ENCODE measurements at regions of chr6 and their contacts with region 1.

Region 1: GRCh38 chr6:593139-593906 is 63.6 kb downstream of the HUS1B start:
- DNase-seq: peak; percentile 69
- H3K4me3 Mint-ChIP-seq: no peak overlapping the region
- H3K27ac Mint-ChIP-seq: no peak overlapping the region
- H3K4me1 Mint-ChIP-seq: no peaks in the 10 kb centered on the region
- H3K27me3 Mint-ChIP-seq: no peaks in the 10 kb centered on the region
- CTCF ChIP-seq: peak; percentile 48

Region 2: DNA sequence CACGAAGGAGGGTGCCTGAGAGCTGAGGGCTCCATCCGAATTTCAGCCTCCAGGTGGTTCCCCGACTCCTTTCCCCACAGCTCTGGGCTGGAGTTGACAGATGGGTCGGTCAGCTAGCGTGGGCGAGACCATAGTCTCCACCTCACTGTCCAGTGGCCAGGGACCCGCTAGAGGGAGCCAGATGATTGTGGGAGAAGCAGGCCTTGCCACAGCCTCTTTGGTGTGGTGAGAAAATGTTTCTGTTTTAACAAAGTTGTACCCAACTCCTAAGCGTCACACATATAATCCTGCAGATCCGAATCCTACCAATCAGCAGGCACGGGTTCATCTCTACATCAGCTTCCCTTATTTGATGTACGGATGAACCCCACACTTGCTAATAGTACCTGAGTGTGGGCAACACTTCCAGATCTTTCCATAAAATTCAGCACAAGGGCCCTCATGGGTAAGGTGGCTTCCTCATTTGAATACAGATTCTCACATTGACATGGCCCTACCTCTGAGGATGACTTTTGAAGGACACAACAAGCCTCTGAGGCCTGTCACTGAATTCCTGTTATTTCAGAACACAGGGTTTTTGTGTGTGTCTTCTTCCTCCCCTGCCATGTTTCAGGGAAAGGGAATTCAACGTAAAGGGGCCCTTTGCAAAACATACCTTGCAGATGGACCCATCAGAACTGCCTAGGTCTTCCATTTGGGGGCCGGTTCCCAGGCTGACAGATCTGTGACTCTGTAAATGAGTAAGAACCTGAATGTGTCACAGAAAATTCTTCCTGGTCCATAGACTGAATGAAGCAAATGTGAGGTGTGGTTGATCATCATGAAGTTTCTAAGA is 404.3 kb before region 1 on chr6:
- CTCF ChIA-PET with region 1: no interaction called
- POLR2A ChIA-PET with region 1: no interaction called
- intact Hi-C with region 1: loop called (anchors 2 kb)
- DNase-seq: peak; percentile 97
- H3K4me3 Mint-ChIP-seq: no peak overlapping the region
- H3K27ac Mint-ChIP-seq: peak overlapping the region; percentile 69
- H3K4me1 Mint-ChIP-seq: peaks cover 18% of the 10 kb centered on the region
- H3K27me3 Mint-ChIP-seq: no peaks in the 10 kb centered on the region
- CTCF ChIP-seq: peak; percentile 92

Region 3: DNA sequence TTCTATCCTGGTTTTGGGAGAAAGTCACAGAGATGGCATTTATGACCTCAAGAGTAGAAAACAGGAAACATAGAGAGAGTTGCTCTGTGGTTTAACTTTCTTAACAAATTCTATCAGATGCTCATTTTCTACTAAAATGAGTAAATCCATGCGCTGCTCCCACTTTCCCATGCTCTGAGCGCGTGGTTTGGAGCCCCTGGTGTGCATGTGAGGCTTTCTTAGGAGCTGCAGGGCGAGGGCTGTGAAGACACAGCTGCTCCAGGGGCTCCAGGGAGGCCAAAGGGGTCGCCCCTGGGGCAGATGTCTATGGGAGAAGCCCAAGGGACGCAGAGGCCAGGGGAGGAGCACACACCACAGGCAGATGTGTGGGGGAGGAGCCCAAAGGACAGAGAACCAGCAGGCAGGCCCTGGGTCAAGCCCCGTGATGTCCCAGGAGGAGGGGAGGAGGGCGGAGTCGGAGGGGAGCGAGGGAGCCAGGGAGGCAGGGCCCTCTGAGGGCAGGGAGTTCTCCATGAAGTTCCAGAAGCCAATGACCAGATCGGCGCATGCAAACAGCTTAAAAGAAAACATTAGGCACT is 78.8 kb before region 1 on chr6:
- CTCF ChIA-PET with region 1: no interaction called
- POLR2A ChIA-PET with region 1: no interaction called
- intact Hi-C with region 1: no loop called
- DNase-seq: no peak
- H3K4me3 Mint-ChIP-seq: no peak overlapping the region
- H3K27ac Mint-ChIP-seq: no peak overlapping the region
- H3K4me1 Mint-ChIP-seq: no peaks in the 10 kb centered on the region
- H3K27me3 Mint-ChIP-seq: no peaks in the 10 kb centered on the region
- CTCF ChIP-seq: no peak

Region 4: DNA sequence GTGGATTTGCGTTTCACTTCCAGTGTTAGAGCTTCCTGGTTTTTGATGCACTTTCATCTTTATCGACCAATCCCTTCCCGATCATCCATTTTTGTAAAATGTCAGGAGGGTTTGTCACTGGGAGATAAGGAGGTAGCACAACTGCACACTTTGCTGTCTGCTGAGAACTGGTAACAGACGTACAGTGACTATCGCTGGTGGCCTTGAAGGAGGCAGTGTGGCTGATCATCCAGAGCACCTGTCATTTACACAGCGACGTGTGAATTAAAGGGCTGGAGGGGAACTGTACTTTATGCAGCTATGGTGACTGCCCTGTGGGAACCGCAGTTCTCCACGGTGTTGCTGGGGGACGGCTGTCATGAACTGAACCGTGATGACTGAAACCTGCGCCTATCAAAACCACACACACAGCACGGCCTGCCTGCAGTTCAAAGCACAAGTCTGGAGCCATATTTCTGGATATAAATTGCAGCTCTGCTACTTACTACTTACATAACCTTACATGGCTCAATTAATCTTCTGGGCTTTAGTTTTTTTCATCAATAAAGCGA is 13.6 kb after region 1 on chr6:
- CTCF ChIA-PET with region 1: interaction called, 11 read pairs
- POLR2A ChIA-PET with region 1: no interaction called
- intact Hi-C with region 1: no loop called
- DNase-seq: no peak
- H3K4me3 Mint-ChIP-seq: no peak overlapping the region
- H3K27ac Mint-ChIP-seq: no peak overlapping the region
- H3K4me1 Mint-ChIP-seq: no peaks in the 10 kb centered on the region
- H3K27me3 Mint-ChIP-seq: no peaks in the 10 kb centered on the region
- CTCF ChIP-seq: no peak

Region 5: GRCh38 chr6:722077-722524 is 128.8 kb after region 1 on chr6:
- CTCF ChIA-PET with region 1: interaction called, 4 read pairs
- POLR2A ChIA-PET with region 1: no interaction called
- intact Hi-C with region 1: loop called (anchors 2 kb)
- DNase-seq: peak; percentile 87
- H3K4me3 Mint-ChIP-seq: no peak overlapping the region
- H3K27ac Mint-ChIP-seq: no peak overlapping the region
- H3K4me1 Mint-ChIP-seq: no peaks in the 10 kb centered on the region
- H3K27me3 Mint-ChIP-seq: peaks cover 12% of the 10 kb centered on the region
- CTCF ChIP-seq: peak; percentile 74

Region 6: GRCh38 chr6:912871-913835 is 319.8 kb after region 1 on chr6:
- CTCF ChIA-PET with region 1: interaction called, 5 read pairs
- POLR2A ChIA-PET with region 1: no interaction called
- intact Hi-C with region 1: loop called (anchors 10 kb)
- DNase-seq: peak; percentile 48
- H3K4me3 Mint-ChIP-seq: no peak overlapping the region
- H3K27ac Mint-ChIP-seq: no peak overlapping the region
- H3K4me1 Mint-ChIP-seq: no peaks in the 10 kb centered on the region
- H3K27me3 Mint-ChIP-seq: peaks cover 12% of the 10 kb centered on the region
- CTCF ChIP-seq: peak; percentile 77